Activated CD4-positive, alpha-beta memory T cell treated with anti-CD3 and anti-CD28 coated beads for 36 hours (primary cell): ENCODE measurements at regions of chr4 and their contacts with region 1.

Region 1: DNA sequence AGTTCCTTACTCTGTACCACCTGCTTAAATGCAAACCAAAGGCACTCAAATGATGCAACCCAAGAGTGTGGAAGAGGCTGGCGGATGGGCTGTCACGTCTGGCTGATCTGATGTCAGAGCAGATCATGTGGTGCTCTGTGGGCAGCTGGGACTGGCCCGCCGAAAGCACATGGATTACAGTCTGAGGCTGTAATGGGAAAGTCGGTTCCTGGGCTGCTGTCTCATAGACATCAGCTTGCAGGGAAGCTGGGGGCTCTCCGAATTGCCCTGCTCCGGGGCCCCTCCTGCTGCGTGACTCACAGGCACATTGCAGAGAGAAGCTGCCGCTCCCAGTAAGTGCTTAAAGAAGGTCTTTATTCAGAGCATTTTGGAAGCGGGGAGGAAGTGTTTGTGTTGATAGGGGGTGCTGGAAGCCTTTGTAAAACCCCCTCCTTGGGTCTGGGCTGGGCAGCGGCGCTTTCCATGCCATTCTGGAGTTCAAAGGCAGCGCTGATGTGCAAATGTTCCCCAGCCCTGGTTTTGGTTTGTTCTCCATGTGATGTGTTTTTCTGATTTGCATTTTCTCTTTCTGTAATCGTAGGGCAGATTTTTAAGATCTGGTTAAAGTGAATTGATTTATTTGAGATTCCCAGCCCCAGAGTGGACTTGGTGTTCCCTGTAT is 181.1 kb downstream of the LARP7 start:
- DNase-seq: peak; percentile 77
- H3K4me3 Mint-ChIP-seq: peak overlapping the region; percentile 75
- H3K27ac Mint-ChIP-seq: no peak overlapping the region
- H3K4me1 Mint-ChIP-seq: peaks cover 10% of the 10 kb centered on the region
- H3K27me3 Mint-ChIP-seq: peaks cover 29% of the 10 kb centered on the region

Region 2: GRCh38 chr4:112857461-112857860 is 39.4 kb after region 1 on chr4:
- CTCF ChIA-PET with region 1: no interaction called
- POLR2A ChIA-PET with region 1: no interaction called
- intact Hi-C with region 1: loop called (anchors 1 kb)
- DNase-seq: no peak
- H3K4me3 Mint-ChIP-seq: no peak overlapping the region
- H3K27ac Mint-ChIP-seq: no peak overlapping the region
- H3K4me1 Mint-ChIP-seq: no peaks in the 10 kb centered on the region
- H3K27me3 Mint-ChIP-seq: peaks cover 3% of the 10 kb centered on the region